CD4-positive, alpha-beta memory T cell (primary cell): ENCODE measurements at regions of chr10 and their contacts with region 1.

Region 1: GRCh38 chr10:130127364-130128061 is 8.7 kb upstream of the GLRX3 start:
- DNase-seq: peak; percentile 38 to 55 (median 53)
- H3K4me3 ChIP-seq: no peak overlapping the region
- H3K4me3 Mint-ChIP-seq: no peak overlapping the region
- H3K27ac ChIP-seq: no peak overlapping the region
- H3K27ac Mint-ChIP-seq: no peak overlapping the region
- H3K4me1 ChIP-seq: peaks cover 5% of the 10 kb centered on the region
- H3K4me1 Mint-ChIP-seq: peaks cover 4 to 5% (median 5%) of the 10 kb centered on the region in 4 donors
- H3K27me3 ChIP-seq: peaks cover 12% of the 10 kb centered on the region
- H3K27me3 Mint-ChIP-seq: peaks cover 11 to 15% of the 10 kb centered on the region in 2 donors

Region 2: DNA sequence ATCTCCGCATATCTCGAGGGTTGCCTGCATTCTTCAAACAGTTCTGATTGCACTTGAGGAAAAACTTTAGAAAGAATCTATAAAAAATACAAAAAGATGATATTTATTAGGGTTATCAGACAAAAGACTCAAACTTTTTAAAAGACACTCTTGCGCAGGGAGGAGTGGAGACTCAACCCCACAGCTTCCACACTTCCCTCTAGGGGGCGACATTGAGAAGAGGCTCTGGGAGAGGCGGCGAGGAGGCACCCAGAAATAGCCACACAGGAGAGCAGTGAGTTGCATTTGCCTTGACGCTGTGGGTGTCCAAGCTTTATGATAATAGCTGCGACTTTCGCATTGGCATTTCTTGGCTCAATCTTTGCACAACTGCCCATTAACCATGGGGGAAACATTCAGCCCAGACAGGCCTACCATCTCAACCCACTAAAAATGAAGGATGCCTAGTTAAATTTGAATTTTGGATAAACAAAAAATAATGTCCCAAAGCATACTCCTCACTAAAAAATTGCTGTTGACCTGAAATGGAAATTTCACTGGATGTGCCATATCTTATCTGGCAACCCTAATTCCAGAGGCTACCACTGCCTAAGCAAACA is 249.6 kb before region 1 on chr10:
- CTCF ChIA-PET with region 1: interaction called, 36 read pairs
- POLR2A ChIA-PET with region 1: no interaction called
- intact Hi-C with region 1: loop called (anchors 1 kb)
- DNase-seq: peak in 4 of 5 donors; percentile 13 to 29 (median 26)
- H3K4me3 ChIP-seq: no peak overlapping the region
- H3K4me3 Mint-ChIP-seq: no peak overlapping the region
- H3K27ac ChIP-seq: no peak overlapping the region
- H3K27ac Mint-ChIP-seq: no peak overlapping the region
- H3K4me1 ChIP-seq: no peaks in the 10 kb centered on the region
- H3K4me1 Mint-ChIP-seq: no peaks in the 10 kb centered on the region
- H3K27me3 ChIP-seq: no peaks in the 10 kb centered on the region
- H3K27me3 Mint-ChIP-seq: peaks cover 5 to 7% of the 10 kb centered on the region in 2 donors

Region 3: GRCh38 chr10:129888784-129889616 is 238.5 kb before region 1 on chr10:
- CTCF ChIA-PET with region 1: interaction called, 14 read pairs
- POLR2A ChIA-PET with region 1: no interaction called
- intact Hi-C with region 1: no loop called
- DNase-seq: peak in 3 of 5 donors; percentile 11 to 28 (median 13)
- H3K4me3 ChIP-seq: no peak overlapping the region
- H3K4me3 Mint-ChIP-seq: no peak overlapping the region
- H3K27ac ChIP-seq: no peak overlapping the region
- H3K27ac Mint-ChIP-seq: no peak overlapping the region
- H3K4me1 ChIP-seq: no peaks in the 10 kb centered on the region
- H3K4me1 Mint-ChIP-seq: no peaks in the 10 kb centered on the region
- H3K27me3 ChIP-seq: no peaks in the 10 kb centered on the region
- H3K27me3 Mint-ChIP-seq: peaks cover 0 to 1% of the 10 kb centered on the region in 2 donors

Region 4: GRCh38 chr10:130141878-130142277 is 14.4 kb after region 1 on chr10:
- CTCF ChIA-PET with region 1: interaction called, 10 read pairs
- POLR2A ChIA-PET with region 1: no interaction called
- intact Hi-C with region 1: no loop called
- DNase-seq: no peak
- H3K4me3 ChIP-seq: no peak overlapping the region
- H3K4me3 Mint-ChIP-seq: peak overlapping the region in 6 of 8 donors; percentile 23 to 62 (median 38)
- H3K27ac ChIP-seq: no peak overlapping the region
- H3K27ac Mint-ChIP-seq: peak overlapping the region in 6 of 7 donors; percentile 2 to 89 (median 75)
- H3K4me1 ChIP-seq: peaks cover 66% of the 10 kb centered on the region
- H3K4me1 Mint-ChIP-seq: peaks cover 51 to 75% (median 57%) of the 10 kb centered on the region in 4 donors
- H3K27me3 ChIP-seq: no peaks in the 10 kb centered on the region
- H3K27me3 Mint-ChIP-seq: no peaks in the 10 kb centered on the region

Region 5: GRCh38 chr10:130179640-130180039 is 52.1 kb after region 1 on chr10:
- CTCF ChIA-PET with region 1: interaction called, 10 read pairs
- POLR2A ChIA-PET with region 1: no interaction called
- intact Hi-C with region 1: no loop called
- DNase-seq: peak in 4 of 5 donors; percentile 44 to 54 (median 50)
- H3K4me3 ChIP-seq: no peak overlapping the region
- H3K4me3 Mint-ChIP-seq: no peak overlapping the region
- H3K27ac ChIP-seq: no peak overlapping the region
- H3K27ac Mint-ChIP-seq: peak overlapping the region in 4 of 7 donors; percentile 20 to 84 (median 70)
- H3K4me1 ChIP-seq: no peaks in the 10 kb centered on the region
- H3K4me1 Mint-ChIP-seq: peaks cover 11 to 19% (median 12%) of the 10 kb centered on the region in 4 donors
- H3K27me3 ChIP-seq: no peaks in the 10 kb centered on the region
- H3K27me3 Mint-ChIP-seq: no peaks in the 10 kb centered on the region

Region 6: DNA sequence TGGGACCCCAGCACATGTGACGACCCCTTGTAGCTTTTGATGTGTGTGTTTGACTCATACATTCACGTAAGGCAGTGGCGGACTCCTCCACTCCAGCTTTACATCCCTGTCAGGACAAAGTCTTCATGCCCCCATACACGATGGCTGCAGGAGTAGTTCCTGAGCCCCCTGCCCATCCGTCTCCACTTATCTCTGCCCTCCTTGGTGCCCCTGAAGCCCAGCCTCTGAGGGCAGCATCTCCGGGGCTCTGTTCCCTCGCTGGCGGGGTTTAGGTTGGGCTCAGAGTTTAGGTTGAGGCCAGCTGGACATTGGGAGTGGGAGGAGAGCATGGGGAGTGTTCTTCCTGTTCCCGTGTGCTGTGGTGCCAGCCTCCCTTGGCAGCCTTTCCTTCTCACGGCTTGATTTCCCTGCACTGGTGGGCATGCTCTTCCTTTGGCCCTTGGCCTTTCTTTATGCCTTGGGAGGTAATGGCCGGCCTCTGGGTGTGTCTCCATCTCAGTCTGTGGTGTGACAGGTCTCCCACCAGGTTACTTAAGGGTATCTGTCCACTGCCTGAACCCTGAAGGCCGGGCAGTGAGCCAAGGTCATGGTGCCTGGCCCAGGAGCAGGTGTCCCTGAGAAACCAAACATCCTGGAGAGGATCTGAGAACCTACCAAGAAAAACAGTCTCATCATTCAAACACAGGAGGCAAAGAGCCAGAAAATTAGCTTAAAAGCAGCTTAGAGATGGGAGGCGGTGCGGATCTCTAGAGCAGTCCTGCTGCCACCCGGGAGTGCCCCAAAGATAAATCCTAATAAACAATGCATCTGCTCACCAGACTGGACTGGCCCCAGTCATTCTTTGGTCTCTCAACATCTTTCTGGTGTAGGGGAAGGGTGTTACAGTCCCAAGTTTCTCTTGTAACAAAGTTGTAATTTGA is 94.2 kb after region 1 on chr10:
- CTCF ChIA-PET with region 1: no interaction called
- POLR2A ChIA-PET with region 1: no interaction called
- intact Hi-C with region 1: no loop called
- DNase-seq: no peak
- H3K4me3 ChIP-seq: no peak overlapping the region
- H3K4me3 Mint-ChIP-seq: no peak overlapping the region
- H3K27ac ChIP-seq: no peak overlapping the region
- H3K27ac Mint-ChIP-seq: no peak overlapping the region
- H3K4me1 ChIP-seq: no peaks in the 10 kb centered on the region
- H3K4me1 Mint-ChIP-seq: no peaks in the 10 kb centered on the region
- H3K27me3 ChIP-seq: no peaks in the 10 kb centered on the region
- H3K27me3 Mint-ChIP-seq: peaks cover 0 to 2% of the 10 kb centered on the region in 2 donors